ENCODE measurements at regions of chr18 and their contacts with region 1.

Region 1: GRCh38 chr18:50218432-50219197 is 23.7 kb upstream of the MYO5B start:
- DNase-seq: peak; percentile 8
- H3K4me3 Mint-ChIP-seq: no peak overlapping the region
- H3K27ac Mint-ChIP-seq: no peak overlapping the region
- H3K4me1 Mint-ChIP-seq: no peaks in the 10 kb centered on the region
- H3K27me3 Mint-ChIP-seq: peaks cover 14% of the 10 kb centered on the region

Region 2: GRCh38 chr18:50429207-50429948 is 210.8 kb after region 1 on chr18:
- intact Hi-C with region 1: loop called (anchors 5 kb)
- DNase-seq: no peak
- H3K4me3 Mint-ChIP-seq: no peak overlapping the region
- H3K27ac Mint-ChIP-seq: no peak overlapping the region
- H3K4me1 Mint-ChIP-seq: no peaks in the 10 kb centered on the region
- H3K27me3 Mint-ChIP-seq: peaks cover 14% of the 10 kb centered on the region

Measured in activated T-helper 1 cell treated with anti-CD3 and anti-CD28 coated beads, Interleukin-12 subunit alpha, Interleukin-12 subunit beta, Interleukin-2, Interleukin-4 antibody, amounts not matched to agents 30 ng/mL and 10 ng/mL and 1 ng/mL, durations not matched to agents 14 hours and 24 hours and 36 hours (primary cell).